ENCODE measurements at regions of chrX and their contacts with region 1.

Region 1: DNA sequence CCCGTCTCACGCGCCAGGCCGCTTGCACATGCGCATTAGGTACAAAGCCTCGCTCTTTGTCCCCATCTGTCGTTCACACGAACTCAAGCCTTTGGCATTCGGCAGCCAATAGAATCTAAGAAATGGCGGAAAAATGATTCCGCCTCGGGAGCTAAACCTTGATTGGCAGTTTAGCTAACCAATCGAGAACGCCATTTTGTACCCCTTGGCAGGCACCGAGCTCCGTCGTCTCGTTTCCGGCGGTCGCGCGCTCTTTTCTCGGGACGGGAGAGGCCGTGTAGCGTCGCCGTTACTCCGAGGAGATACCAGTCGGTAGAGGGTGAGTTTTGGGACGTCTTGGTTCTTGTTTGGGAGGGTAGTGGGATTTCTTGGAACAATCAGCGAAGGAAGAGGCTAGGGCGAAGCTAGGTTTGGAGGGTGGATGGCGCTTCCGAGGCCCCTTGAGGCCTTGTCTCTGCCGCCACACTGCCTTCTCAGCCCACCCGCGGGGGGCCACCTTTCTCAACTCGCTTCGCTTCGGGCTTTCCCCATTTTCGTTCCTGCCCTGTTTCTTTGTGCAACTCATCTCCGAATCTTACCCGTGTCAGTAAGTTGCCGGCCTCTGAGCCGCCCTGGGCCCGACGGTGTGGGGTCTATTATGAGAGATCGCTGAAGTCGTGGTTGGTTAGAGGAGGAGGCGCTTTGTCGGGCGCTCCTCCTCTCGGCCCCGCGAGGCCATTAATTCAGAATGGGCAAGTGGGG is at the start of gene NONO:
- DNase-seq: peak; percentile 54 to 86 (median 82)
- H3K4me3 ChIP-seq: peak within 1 kb of the TSS; percentile 52 to 84 (median 69)
- H3K27ac ChIP-seq: peak within 1 kb of the TSS; percentile 62 to 95 (median 90)
- H3K27me3 ChIP-seq: peaks cover 0 to 34% (median 0%) of the 10 kb centered on the region in 45 donors
- CTCF ChIP-seq: peak in 14 of 56 donors; percentile 4 to 23 (median 10)
- total RNA-seq, gene NONO: 98.6 to 184 (median 146) TPM

Region 2: GRCh38 chrX:71254092-71254941 is 29.3 kb before region 1 on chrX and contains the start of gene ZMYM3:
- intact Hi-C with region 1: loop called in 1 of 2 experiments (anchors 2 kb)
- DNase-seq: peak; percentile 74 to 91 (median 85)
- H3K4me3 ChIP-seq: peak within 1 kb of the TSS; percentile 45 to 81 (median 65)
- H3K27ac ChIP-seq: peak within 1 kb of the TSS in 57 of 59 donors; percentile 29 to 89 (median 82)
- H3K27me3 ChIP-seq: peaks cover 0 to 51% (median 7%) of the 10 kb centered on the region in 45 donors
- CTCF ChIP-seq: peak in 11 of 56 donors; percentile 4 to 27 (median 13)
- total RNA-seq, gene ZMYM3: 33.0 to 60.8 (median 45.7) TPM

Region 3: GRCh38 chrX:71365876-71366673 is 82.5 kb after region 1 on chrX and contains the start of gene TAF1:
- intact Hi-C with region 1: loop called in 1 of 2 experiments (anchors 5 kb)
- DNase-seq: peak; percentile 88 to 97 (median 94)
- H3K4me3 ChIP-seq: peak within 1 kb of the TSS; percentile 49 to 82 (median 69)
- H3K27ac ChIP-seq: peak within 1 kb of the TSS in 56 of 59 donors; percentile 43 to 91 (median 78)
- H3K27me3 ChIP-seq: peaks cover 0 to 12% (median 0%) of the 10 kb centered on the region in 45 donors
- CTCF ChIP-seq: peak in 3 of 56 donors; percentile 3 to 15 (median 13)
- total RNA-seq, gene TAF1: 31.9 to 66.2 (median 48.2) TPM

Region 4: DNA sequence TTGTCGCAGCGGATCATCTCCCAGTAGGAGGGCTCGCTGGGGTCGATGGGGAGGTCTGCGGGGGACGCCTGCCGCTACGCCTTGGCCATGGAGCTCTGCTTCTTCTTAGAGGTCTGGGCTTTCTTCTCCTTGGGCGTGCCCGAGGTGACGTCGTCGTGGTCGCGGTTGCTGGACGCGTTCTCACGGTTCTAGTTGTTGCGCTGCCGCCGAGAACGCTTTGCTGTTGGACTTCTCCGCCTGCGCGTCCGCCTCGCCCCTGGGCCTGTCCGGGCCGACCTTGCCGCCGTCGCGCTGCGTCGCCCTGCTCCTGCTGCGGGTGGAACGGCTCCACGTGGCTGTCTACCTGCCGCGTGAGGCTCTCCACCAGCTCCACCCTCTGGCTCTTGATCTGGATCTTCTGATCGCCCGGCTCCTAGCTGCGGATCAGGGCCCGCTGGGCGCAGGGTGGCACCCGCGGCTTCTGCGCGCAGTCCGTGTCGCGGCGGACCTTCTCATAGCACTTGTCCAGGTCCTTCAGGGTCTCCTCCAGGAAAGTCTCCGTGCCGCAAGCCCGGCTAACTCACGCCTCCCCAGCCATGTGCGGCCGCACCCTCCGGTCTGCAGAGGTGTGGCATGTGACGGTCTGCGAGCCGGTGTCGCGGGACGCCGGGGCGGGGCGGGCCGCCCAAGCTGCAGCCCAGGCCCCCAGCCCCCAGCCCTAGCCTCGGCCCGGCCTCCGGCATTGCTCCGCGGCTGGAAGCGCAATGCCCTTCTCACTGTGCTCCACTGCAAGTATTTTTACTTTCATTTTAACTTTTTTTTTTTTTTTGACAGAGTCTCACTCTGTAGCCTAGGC is 208.9 kb after region 1 on chrX:
- intact Hi-C with region 1: no loop called
- DNase-seq: peak in 8 of 10 donors; percentile 4 to 52 (median 30)
- H3K4me3 ChIP-seq: peak overlapping the region; percentile 22 to 74 (median 58)
- H3K27ac ChIP-seq: no peak overlapping the region
- H3K27me3 ChIP-seq: peaks cover 0 to 35% (median 0%) of the 10 kb centered on the region in 45 donors
- CTCF ChIP-seq: peak in 1 of 56 donors; percentile 11